A549 (cell line): ENCODE measurements at regions of chr22 and their contacts with region 1.

Region 1: GRCh38 chr22:20803696-20804324 is 29.9 kb downstream of the SERPIND1 start:
- DNase-seq: peak; percentile 22 to 39
- ATAC-seq: peak; percentile 85 to 86; a peak in 5 of 6 replicates
- H3K4me3 ChIP-seq: no peak overlapping the region
- H3K27ac ChIP-seq: no peak overlapping the region
- H3K4me1 ChIP-seq: peaks cover 24% of the 10 kb centered on the region
- CTCF ChIP-seq: peak; percentile 51
- EP300 ChIP-seq: no peak
- POLR2A ChIP-seq: no peak
- RAD21 ChIP-seq: peak; percentile 64 to 78

Region 2: DNA sequence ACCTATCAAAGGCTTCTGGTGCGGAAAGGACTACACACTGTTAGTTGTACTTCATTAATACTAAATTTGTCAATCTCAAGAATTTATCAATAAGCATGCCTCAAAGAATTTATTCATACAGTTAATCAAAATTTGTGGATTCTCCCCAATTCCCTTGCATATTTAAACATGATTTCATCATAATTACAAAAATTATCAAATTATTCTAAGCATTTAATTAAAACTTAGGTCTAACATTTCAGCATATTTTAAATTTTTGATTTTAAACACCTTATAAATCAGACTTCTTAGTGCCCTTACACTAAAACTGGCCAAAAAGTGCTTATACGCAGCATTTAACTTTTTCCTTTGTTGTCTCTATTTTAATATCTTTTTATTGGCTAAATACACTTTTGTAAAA is 43.7 kb before region 1 on chr22:
- CTCF ChIA-PET with region 1: no interaction called
- POLR2A ChIA-PET with region 1: no interaction called
- DNase-seq: no peak
- ATAC-seq: no peak
- H3K4me3 ChIP-seq: no peak overlapping the region
- H3K27ac ChIP-seq: no peak overlapping the region
- H3K4me1 ChIP-seq: no peaks in the 10 kb centered on the region
- CTCF ChIP-seq: no peak
- EP300 ChIP-seq: no peak
- POLR2A ChIP-seq: no peak
- RAD21 ChIP-seq: no peak

Region 3: DNA sequence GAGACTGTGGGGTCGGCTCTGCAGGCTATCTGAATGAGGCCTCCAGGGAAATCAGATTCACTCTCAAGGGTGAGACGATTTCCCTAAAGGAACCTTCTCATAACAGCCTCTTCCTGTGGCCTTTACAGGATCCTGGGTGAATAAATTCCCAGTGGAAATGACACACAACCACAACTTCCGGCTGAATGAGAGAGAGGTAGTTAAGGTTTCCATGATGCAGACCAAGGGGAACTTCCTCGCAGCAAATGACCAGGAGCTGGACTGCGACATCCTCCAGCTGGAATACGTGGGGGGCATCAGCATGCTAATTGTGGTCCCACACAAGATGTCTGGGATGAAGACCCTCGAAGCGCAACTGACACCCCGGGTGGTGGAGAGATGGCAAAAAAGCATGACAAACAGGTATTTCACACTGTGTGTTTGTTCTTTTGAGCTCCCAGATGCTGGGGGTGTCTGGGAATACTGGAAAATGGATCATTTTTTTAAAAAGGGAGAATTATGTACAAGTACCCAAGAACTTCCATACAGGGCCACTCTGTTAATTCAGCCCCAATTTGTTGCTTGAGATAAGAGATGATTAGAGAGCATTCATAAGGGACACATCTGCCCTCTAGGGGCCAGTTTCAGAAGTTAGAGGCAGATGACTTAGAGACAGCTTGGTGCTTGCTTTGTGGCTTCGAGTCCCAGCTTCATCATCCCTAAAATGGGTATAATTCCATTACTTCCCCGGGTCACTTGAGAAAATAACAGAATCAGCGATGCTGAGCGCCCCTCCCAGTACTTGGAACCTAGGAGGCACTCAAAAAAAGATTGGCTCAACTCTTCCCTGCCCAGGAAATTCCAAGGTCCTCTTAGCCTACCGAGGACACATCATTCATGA is 19.7 kb before region 1 on chr22:
- CTCF ChIA-PET with region 1: interaction called, 26 read pairs
- POLR2A ChIA-PET with region 1: no interaction called
- DNase-seq: peak; percentile 30 to 62
- ATAC-seq: peak; percentile 85 to 88; a peak in 5 of 6 replicates
- H3K4me3 ChIP-seq: no peak overlapping the region
- H3K27ac ChIP-seq: no peak overlapping the region
- H3K4me1 ChIP-seq: no peaks in the 10 kb centered on the region
- CTCF ChIP-seq: peak; percentile 56
- EP300 ChIP-seq: no peak
- POLR2A ChIP-seq: no peak
- RAD21 ChIP-seq: peak; percentile 47 to 51; a peak in 4 of 5 replicates

Region 4: GRCh38 chr22:20792947-20793294 is 10.9 kb before region 1 on chr22:
- CTCF ChIA-PET with region 1: interaction called, 14 read pairs
- POLR2A ChIA-PET with region 1: no interaction called
- DNase-seq: no peak
- ATAC-seq: no peak
- H3K4me3 ChIP-seq: no peak overlapping the region
- H3K27ac ChIP-seq: no peak overlapping the region
- H3K4me1 ChIP-seq: peaks cover 5% of the 10 kb centered on the region; the same call in 2 of the 3 replicates
- CTCF ChIP-seq: no peak
- EP300 ChIP-seq: no peak
- POLR2A ChIP-seq: no peak
- RAD21 ChIP-seq: no peak

Region 5: DNA sequence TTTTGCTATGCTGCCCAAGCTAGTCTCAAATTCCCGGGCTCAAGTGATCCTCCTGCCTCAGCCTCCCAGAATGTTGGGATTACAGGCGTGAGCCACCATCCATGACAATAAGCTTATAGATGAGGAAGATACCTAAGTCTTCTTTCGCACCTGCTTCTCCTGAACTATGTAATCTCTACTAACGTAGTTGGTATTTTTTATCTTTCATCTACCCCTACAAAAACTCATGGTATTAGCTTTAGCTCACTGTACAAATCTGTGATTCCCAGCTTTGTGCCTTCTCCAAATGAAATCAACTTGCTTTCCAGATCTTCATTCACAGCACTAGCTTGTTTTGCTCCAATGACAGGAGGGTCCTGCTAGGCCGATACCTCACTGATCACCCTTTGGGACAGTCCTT is 18.4 kb after region 1 on chr22:
- CTCF ChIA-PET with region 1: interaction called, 14 read pairs
- POLR2A ChIA-PET with region 1: no interaction called
- DNase-seq: no peak
- ATAC-seq: no peak
- H3K4me3 ChIP-seq: no peak overlapping the region
- H3K27ac ChIP-seq: no peak overlapping the region
- H3K4me1 ChIP-seq: no peaks in the 10 kb centered on the region
- CTCF ChIP-seq: no peak
- EP300 ChIP-seq: no peak
- POLR2A ChIP-seq: no peak
- RAD21 ChIP-seq: no peak